Activated CD4-positive, alpha-beta T cell treated with anti-CD3 and anti-CD28 coated beads, Interleukin-2, amount 10 ng/mL, durations not matched to agents 24 days and 14 days (primary cell): ENCODE measurements at regions of chr12 and their contacts with region 1.

Region 1: DNA sequence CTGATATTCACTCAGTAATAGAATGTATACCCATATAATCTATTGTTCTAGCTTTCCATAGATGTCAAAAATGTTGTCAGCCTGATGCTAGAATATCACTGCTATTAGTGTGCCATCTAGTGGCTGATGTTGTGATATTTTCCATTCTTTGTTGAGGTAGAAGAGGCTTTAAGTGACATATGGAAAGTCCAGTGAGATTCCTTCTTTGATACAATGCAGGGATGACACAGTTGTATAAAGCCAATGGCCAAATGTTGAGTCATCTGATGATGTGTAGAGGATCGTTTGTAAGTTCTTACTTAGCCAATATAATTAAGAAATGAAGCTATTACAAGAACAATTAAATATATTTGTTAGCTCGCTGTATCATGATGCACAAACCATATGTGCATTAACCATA is 58.1 kb upstream of the PCED1B start:
- DNase-seq: peak; percentile 79
- H3K4me3 Mint-ChIP-seq: no peak overlapping the region
- H3K27ac Mint-ChIP-seq: no peak overlapping the region
- H3K4me1 Mint-ChIP-seq: peaks cover 4% of the 10 kb centered on the region
- H3K27me3 Mint-ChIP-seq: peaks cover 26% of the 10 kb centered on the region

Region 2: GRCh38 chr12:46071769-46072624 is 949.3 kb before region 1 on chr12:
- intact Hi-C with region 1: loop called (anchors 5 kb)
- DNase-seq: peak; percentile 88
- H3K4me3 Mint-ChIP-seq: no peak overlapping the region
- H3K27ac Mint-ChIP-seq: peak overlapping the region; percentile 5
- H3K4me1 Mint-ChIP-seq: peaks cover 5% of the 10 kb centered on the region
- H3K27me3 Mint-ChIP-seq: peaks cover 16% of the 10 kb centered on the region

Region 3: DNA sequence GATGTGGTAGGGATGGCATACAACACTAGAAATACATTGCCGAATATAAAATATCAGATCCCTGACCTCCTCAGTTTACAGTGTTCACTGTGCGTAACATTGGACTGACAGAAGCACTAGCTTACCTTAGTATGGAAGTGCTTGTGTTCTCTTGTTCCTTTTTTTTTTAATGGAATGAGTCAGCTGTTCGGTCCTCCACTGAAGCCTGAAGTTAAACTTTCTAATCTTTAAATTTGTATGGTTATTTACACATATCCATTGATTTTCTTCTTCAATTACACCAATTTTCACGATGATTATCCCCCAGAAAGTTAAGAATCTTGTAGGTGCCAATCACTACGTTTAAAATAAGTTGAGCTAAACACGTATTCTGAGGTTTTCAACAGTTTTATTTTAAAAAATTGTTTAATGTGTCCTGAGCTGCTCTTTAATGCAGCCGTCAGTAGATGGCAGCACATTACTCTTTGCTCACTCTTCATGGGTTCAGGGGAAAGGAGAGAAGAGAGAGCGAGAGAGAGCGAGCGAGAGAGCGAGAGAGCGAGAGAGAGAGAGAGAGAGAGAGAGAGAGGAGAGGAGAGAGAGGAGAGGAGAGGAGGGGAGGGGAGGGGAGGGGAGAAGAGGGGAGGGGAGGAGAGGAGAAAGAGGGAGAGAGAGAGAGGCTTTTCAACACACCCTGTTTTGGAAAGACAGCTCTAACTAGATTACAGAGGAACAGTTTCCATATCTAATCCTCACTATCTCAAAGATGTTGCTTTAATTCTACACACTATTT is 896.3 kb before region 1 on chr12:
- intact Hi-C with region 1: loop called (anchors 1 kb)
- DNase-seq: peak; percentile 87
- H3K4me3 Mint-ChIP-seq: peak overlapping the region; percentile 56
- H3K27ac Mint-ChIP-seq: peak overlapping the region; percentile 75
- H3K4me1 Mint-ChIP-seq: peaks cover 5% of the 10 kb centered on the region
- H3K27me3 Mint-ChIP-seq: peaks cover 49% of the 10 kb centered on the region

Region 4: DNA sequence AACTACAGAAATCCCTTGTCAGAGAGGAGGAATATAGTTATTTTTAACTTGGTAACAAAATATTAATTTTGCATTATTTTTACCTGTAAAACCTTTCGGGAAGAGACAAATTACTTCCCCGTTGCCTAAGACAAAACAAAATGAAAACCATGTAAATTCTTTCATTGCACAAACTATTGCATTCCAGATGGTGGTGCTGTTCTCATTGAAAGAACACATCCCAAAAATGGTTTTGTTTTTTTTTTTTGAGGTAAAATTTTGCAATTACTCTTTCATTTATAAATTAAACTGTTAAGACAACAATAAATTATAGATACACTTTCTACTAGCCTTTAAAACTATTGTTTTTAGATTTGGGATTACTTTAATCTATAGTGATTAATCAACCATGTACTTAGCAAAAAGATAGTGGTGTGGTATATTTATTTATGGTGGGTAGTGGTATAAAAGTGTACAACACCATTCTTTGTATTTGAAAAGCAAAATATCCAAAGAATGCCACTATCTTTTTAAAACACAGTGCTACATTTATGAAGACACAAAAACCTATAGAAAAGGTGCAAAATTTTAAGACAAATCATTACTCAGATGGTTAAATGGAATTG is 867.9 kb before region 1 on chr12:
- intact Hi-C with region 1: loop called (anchors 10 kb)
- DNase-seq: no peak
- H3K4me3 Mint-ChIP-seq: no peak overlapping the region
- H3K27ac Mint-ChIP-seq: no peak overlapping the region
- H3K4me1 Mint-ChIP-seq: no peaks in the 10 kb centered on the region
- H3K27me3 Mint-ChIP-seq: peaks cover 11% of the 10 kb centered on the region